Activated CD4-positive, alpha-beta T cell treated with anti-CD3 and anti-CD28 coated beads for 36 hours (primary cell): ENCODE measurements at regions of chr2 and their contacts with region 1.

Region 1: GRCh38 chr2:85327822-85328617 is at the start of gene TGOLN2:
- DNase-seq: peak; percentile 98
- ATAC-seq: peak; percentile 91
- H3K4me3 Mint-ChIP-seq: peak within 1 kb of the TSS; percentile 86
- H3K27ac Mint-ChIP-seq: peak within 1 kb of the TSS; percentile 99
- H3K4me1 Mint-ChIP-seq: peaks cover 37% of the 10 kb centered on the region
- H3K27me3 Mint-ChIP-seq: no peaks in the 10 kb centered on the region
- total RNA-seq, gene TGOLN2: 84.0 to 90.4 TPM

Region 2: DNA sequence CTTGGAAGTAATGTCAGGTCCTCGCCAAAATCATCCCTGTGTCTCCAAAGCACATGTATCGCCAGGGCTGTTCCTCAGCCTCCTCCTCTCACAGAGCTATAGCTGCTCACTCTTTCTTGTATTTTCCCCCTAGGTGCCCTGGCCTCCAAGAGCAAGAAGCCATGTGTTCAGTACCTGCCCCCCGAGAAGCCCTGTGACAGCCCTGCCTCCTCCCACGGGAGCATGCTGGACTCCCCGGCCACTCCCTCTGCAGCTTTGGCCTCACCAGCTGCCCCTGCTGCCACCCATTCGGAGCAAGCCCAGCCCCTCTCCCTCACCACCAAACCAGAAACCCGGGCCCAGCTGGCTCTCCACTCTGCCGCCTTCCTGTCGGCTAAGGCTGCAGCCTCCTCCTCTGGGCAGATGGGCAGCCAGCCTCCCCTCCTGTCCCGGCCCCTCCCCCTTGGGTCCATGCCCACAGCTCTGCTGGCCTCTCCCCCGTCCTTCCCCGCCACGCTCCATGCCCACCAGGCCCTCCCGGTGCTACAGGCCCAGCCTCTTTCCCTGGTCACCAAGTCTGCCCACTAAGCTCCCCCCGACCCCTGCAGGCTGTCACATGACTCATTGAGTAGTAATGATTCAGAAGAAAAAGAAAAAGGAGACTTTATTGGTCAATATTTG is 19.0 kb before region 1 on chr2:
- CTCF ChIA-PET with region 1: interaction called, 3 read pairs
- POLR2A ChIA-PET with region 1: interaction called, 5 read pairs
- intact Hi-C with region 1: loop called in 1 of 2 experiments (anchors 1 kb)
- DNase-seq: peak; percentile 28
- ATAC-seq: peak; percentile 25
- H3K4me3 Mint-ChIP-seq: peak overlapping the region; percentile 47
- H3K27ac Mint-ChIP-seq: peak overlapping the region; percentile 64
- H3K4me1 Mint-ChIP-seq: peaks cover 35% of the 10 kb centered on the region
- H3K27me3 Mint-ChIP-seq: no peaks in the 10 kb centered on the region

Region 3: GRCh38 chr2:85409845-85410583 is 82.0 kb after region 1 on chr2 and contains the start of gene CAPG:
- CTCF ChIA-PET with region 1: no interaction called
- POLR2A ChIA-PET with region 1: no interaction called
- intact Hi-C with region 1: loop called in 1 of 2 experiments (anchors 5 kb)
- DNase-seq: peak; percentile 65
- ATAC-seq: peak; percentile 10
- H3K4me3 Mint-ChIP-seq: peak within 1 kb of the TSS; percentile 60
- H3K27ac Mint-ChIP-seq: peak within 1 kb of the TSS; percentile 51
- H3K4me1 Mint-ChIP-seq: peaks cover 59% of the 10 kb centered on the region
- H3K27me3 Mint-ChIP-seq: no peaks in the 10 kb centered on the region
- total RNA-seq, gene CAPG: 28.3 to 45.6 TPM

Region 4: GRCh38 chr2:85561317-85561979 is 233.4 kb after region 1 on chr2 and contains the start of gene GGCX:
- CTCF ChIA-PET with region 1: no interaction called
- POLR2A ChIA-PET with region 1: no interaction called
- intact Hi-C with region 1: loop called in 1 of 2 experiments (anchors 1 kb)
- DNase-seq: peak; percentile 98
- ATAC-seq: peak; percentile 94
- H3K4me3 Mint-ChIP-seq: peak within 1 kb of the TSS; percentile 95
- H3K27ac Mint-ChIP-seq: peak within 1 kb of the TSS; percentile 93
- H3K4me1 Mint-ChIP-seq: peaks cover 33% of the 10 kb centered on the region
- H3K27me3 Mint-ChIP-seq: no peaks in the 10 kb centered on the region
- total RNA-seq, gene GGCX: 20.1 to 22.2 TPM

Region 5: GRCh38 chr2:86035883-86036668 is 708.1 kb after region 1 on chr2:
- CTCF ChIA-PET with region 1: no interaction called
- POLR2A ChIA-PET with region 1: no interaction called
- intact Hi-C with region 1: loop called in 1 of 2 experiments (anchors 10 kb)
- DNase-seq: peak; percentile 77
- ATAC-seq: peak; percentile 37
- H3K4me3 Mint-ChIP-seq: peak overlapping the region; percentile 10
- H3K27ac Mint-ChIP-seq: peak overlapping the region; percentile 97
- H3K4me1 Mint-ChIP-seq: peaks cover 70% of the 10 kb centered on the region
- H3K27me3 Mint-ChIP-seq: no peaks in the 10 kb centered on the region

Region 6: GRCh38 chr2:86195055-86195807 is 867.2 kb after region 1 on chr2 and contains the start of gene IMMT:
- CTCF ChIA-PET with region 1: no interaction called
- POLR2A ChIA-PET with region 1: no interaction called
- intact Hi-C with region 1: loop called in 1 of 2 experiments (anchors 2 kb)
- DNase-seq: peak; percentile 97
- ATAC-seq: peak; percentile 93
- H3K4me3 Mint-ChIP-seq: peak within 1 kb of the TSS; percentile 81
- H3K27ac Mint-ChIP-seq: peak within 1 kb of the TSS; percentile 92
- H3K4me1 Mint-ChIP-seq: peaks cover 44% of the 10 kb centered on the region
- H3K27me3 Mint-ChIP-seq: no peaks in the 10 kb centered on the region
- total RNA-seq, gene IMMT: 172 to 182 TPM